T-cell (primary cell): ENCODE measurements at regions of chr7 and their contacts with region 1.

Region 1: GRCh38 chr7:16619979-16620408 is 25.6 kb downstream of the ANKMY2 start:
- DNase-seq: no peak
- ATAC-seq: no peak
- H3K4me3 ChIP-seq: no peak overlapping the region
- H3K4me3 Mint-ChIP-seq: no peak overlapping the region
- H3K27ac ChIP-seq: no peak overlapping the region
- H3K27ac Mint-ChIP-seq: peak overlapping the region in 1 of 2 donors; percentile 50
- H3K4me1 ChIP-seq: no peaks in the 10 kb centered on the region
- H3K4me1 Mint-ChIP-seq: peaks cover 2 to 5% (median 4%) of the 10 kb centered on the region in 3 donors
- H3K27me3 ChIP-seq: no peaks in the 10 kb centered on the region
- H3K27me3 Mint-ChIP-seq: no peaks in the 10 kb centered on the region

Region 2: GRCh38 chr7:16579216-16579615 is 40.8 kb before region 1 on chr7:
- CTCF ChIA-PET with region 1: no interaction called
- POLR2A ChIA-PET with region 1: no interaction called
- DNase-seq: no peak
- ATAC-seq: no peak
- H3K4me3 ChIP-seq: no peak overlapping the region
- H3K4me3 Mint-ChIP-seq: no peak overlapping the region
- H3K27ac ChIP-seq: no peak overlapping the region
- H3K27ac Mint-ChIP-seq: no peak overlapping the region
- H3K4me1 ChIP-seq: no peaks in the 10 kb centered on the region
- H3K4me1 Mint-ChIP-seq: no peaks in the 10 kb centered on the region
- H3K27me3 ChIP-seq: peaks cover 0 to 11% of the 10 kb centered on the region in 2 experiments
- H3K27me3 Mint-ChIP-seq: peaks cover 2 to 7% of the 10 kb centered on the region in 2 donors

Region 3: GRCh38 chr7:16636555-16637101 is 16.6 kb after region 1 on chr7:
- CTCF ChIA-PET with region 1: no interaction called
- POLR2A ChIA-PET with region 1: interaction called in 1 of 2 experiments, 12 read pairs
- DNase-seq: no peak
- ATAC-seq: no peak
- H3K4me3 ChIP-seq: no peak overlapping the region
- H3K4me3 Mint-ChIP-seq: no peak overlapping the region
- H3K27ac ChIP-seq: no peak overlapping the region
- H3K27ac Mint-ChIP-seq: no peak overlapping the region
- H3K4me1 ChIP-seq: no peaks in the 10 kb centered on the region
- H3K4me1 Mint-ChIP-seq: peaks cover 2 to 11% (median 2%) of the 10 kb centered on the region in 3 donors
- H3K27me3 ChIP-seq: no peaks in the 10 kb centered on the region
- H3K27me3 Mint-ChIP-seq: no peaks in the 10 kb centered on the region